ENCODE measurements at regions of chr6 and their contacts with region 1.

Region 1: DNA sequence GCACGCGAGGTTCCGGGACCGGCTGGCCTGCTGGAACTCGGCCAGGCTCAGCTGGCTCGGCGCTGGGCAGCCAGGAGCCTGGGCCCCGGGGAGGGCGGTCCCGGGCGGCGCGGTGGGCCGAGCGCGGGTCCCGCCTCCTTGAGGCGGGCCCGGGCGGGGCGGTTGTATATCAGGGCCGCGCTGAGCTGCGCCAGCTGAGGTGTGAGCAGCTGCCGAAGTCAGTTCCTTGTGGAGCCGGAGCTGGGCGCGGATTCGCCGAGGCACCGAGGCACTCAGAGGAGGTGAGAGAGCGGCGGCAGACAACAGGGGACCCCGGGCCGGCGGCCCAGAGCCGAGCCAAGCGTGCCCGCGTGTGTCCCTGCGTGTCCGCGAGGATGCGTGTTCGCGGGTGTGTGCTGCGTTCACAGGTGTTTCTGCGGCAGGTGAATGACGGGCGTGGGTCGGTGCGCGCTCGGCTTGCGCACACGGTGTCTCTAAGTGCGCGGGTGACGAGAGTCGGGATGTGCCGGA is at the start of gene CDKN1A:
- DNase-seq: peak; percentile 94
- H3K4me3 ChIP-seq: peak within 1 kb of the TSS; percentile 91 to 98 (median 96)
- H3K27ac ChIP-seq: peak within 1 kb of the TSS; percentile 93
- H3K4me1 ChIP-seq: peaks cover 59% of the 10 kb centered on the region
- H3K27me3 ChIP-seq: no peaks in the 10 kb centered on the region
- CTCF ChIP-seq: no peak
- total RNA-seq, gene CDKN1A: 687 to 707 TPM

Region 2: DNA sequence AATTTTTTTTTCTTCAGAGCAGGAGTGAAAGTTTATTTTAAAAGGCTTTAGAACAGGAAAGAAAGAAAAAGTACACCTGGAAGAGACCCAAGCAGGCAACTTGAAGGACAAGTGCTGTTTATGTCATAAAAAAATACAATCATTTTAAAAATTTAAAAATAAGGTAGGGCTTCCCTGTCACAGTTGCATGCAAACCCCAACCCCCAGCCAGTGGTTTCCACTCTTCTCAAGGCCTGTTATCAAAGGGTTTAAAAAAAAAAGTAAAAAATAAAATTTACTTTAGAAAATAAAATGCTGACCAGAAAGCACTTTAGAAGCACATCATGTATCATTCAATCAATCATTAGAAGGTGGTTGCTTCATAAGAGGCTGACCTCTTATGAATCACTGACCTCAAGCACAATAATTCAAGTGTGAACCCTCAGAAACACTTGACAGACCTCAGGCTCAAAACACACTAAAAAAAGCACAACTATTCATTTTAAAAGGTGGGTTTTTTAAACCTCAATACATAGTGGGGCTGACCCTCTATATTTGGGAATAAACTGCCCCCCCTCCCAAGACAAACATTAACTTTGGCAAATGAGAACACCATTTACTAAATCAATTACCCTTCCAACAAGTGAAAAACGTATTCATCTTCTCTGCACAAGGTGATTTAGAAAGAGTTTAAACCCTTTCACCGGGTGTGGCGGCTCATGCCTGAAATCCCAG is 1997.6 kb before region 1 on chr6:
- CTCF ChIA-PET with region 1: interaction called, 36 read pairs
- dilution Hi-C with region 1: no loop called
- in situ Hi-C with region 1: no loop called
- intact Hi-C with region 1: no loop called
- DNase-seq: peak; percentile 67
- H3K4me3 ChIP-seq: no peak overlapping the region
- H3K27ac ChIP-seq: no peak overlapping the region
- H3K4me1 ChIP-seq: peaks cover 11% of the 10 kb centered on the region
- H3K27me3 ChIP-seq: no peaks in the 10 kb centered on the region
- CTCF ChIP-seq: no peak

Region 3: GRCh38 chr6:36594029-36594815 is 84.4 kb before region 1 on chr6 and contains the start of gene SRSF3:
- CTCF ChIA-PET with region 1: interaction called, 12 read pairs
- dilution Hi-C with region 1: loop called (anchors 5 kb)
- in situ Hi-C with region 1: no loop called
- intact Hi-C with region 1: no loop called
- DNase-seq: peak; percentile 97
- H3K4me3 ChIP-seq: peak within 1 kb of the TSS; percentile 68 to 99 (median 92)
- H3K27ac ChIP-seq: peak within 1 kb of the TSS; percentile 97
- H3K4me1 ChIP-seq: peaks cover 35% of the 10 kb centered on the region
- H3K27me3 ChIP-seq: no peaks in the 10 kb centered on the region
- CTCF ChIP-seq: peak in 1 of 2 donors; percentile 57
- total RNA-seq, gene SRSF3: 167 to 323 TPM

Region 4: GRCh38 chr6:36623547-36624459 is 54.8 kb before region 1 on chr6:
- CTCF ChIA-PET with region 1: no interaction called
- dilution Hi-C with region 1: loop called (anchors 5 kb)
- in situ Hi-C with region 1: loop called (anchors 5 to 10 kb)
- intact Hi-C with region 1: loop called (anchors 1 kb)
- DNase-seq: peak; percentile 82
- H3K4me3 ChIP-seq: no peak overlapping the region
- H3K27ac ChIP-seq: no peak overlapping the region
- H3K4me1 ChIP-seq: peaks cover 3% of the 10 kb centered on the region
- H3K27me3 ChIP-seq: no peaks in the 10 kb centered on the region
- CTCF ChIP-seq: peak; percentile 94 to 98

Region 5: GRCh38 chr6:36666726-36667591 is 11.6 kb before region 1 on chr6:
- CTCF ChIA-PET with region 1: no interaction called
- dilution Hi-C with region 1: no loop called
- in situ Hi-C with region 1: no loop called
- intact Hi-C with region 1: loop called (anchors 1 kb)
- DNase-seq: peak; percentile 99
- H3K4me3 ChIP-seq: no peak overlapping the region
- H3K27ac ChIP-seq: peak overlapping the region; percentile 60
- H3K4me1 ChIP-seq: peaks cover 15% of the 10 kb centered on the region
- H3K27me3 ChIP-seq: no peaks in the 10 kb centered on the region
- CTCF ChIP-seq: peak in 1 of 2 donors; percentile 14

Region 6: GRCh38 chr6:37406726-37407356 is 728.3 kb after region 1 on chr6:
- CTCF ChIA-PET with region 1: no interaction called
- dilution Hi-C with region 1: no loop called
- in situ Hi-C with region 1: no loop called
- intact Hi-C with region 1: no loop called
- DNase-seq: peak; percentile 70
- H3K4me3 ChIP-seq: no peak overlapping the region
- H3K27ac ChIP-seq: peak overlapping the region; percentile 41
- H3K4me1 ChIP-seq: peaks cover 6% of the 10 kb centered on the region
- H3K27me3 ChIP-seq: no peaks in the 10 kb centered on the region
- CTCF ChIP-seq: no peak